CD14-positive monocyte (primary cell): ENCODE measurements at regions of chr11 and their contacts with region 1.

Region 1: DNA sequence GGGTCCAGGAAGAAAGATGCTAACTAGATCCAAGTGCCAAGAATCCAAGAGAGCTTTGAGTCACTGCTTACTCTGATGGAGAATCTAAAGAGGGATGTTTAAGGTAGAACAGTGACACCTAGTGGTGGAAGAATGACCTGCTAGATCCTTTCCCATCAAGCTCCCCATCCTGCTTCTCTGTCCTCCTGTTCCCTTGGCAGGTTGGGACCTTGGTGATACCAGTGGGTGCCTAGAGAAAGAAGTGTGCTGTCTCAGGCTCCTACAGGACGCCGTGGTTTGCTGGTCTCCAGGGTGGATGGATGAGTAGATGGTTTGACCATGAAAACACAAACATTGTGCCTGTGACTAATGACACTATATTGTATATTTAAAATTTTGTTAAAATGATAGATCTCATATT is 383.7 kb downstream of the TMEM135 start:
- DNase-seq: peak; percentile 24 to 55 (median 50)
- H3K4me3 ChIP-seq: no peak overlapping the region
- H3K4me3 Mint-ChIP-seq: no peak overlapping the region
- H3K27ac ChIP-seq: no peak overlapping the region
- H3K27ac Mint-ChIP-seq: no peak overlapping the region
- H3K4me1 ChIP-seq: no peaks in the 10 kb centered on the region
- H3K4me1 Mint-ChIP-seq: no peaks in the 10 kb centered on the region
- H3K27me3 ChIP-seq: no peaks in the 10 kb centered on the region
- H3K27me3 Mint-ChIP-seq: peaks cover 0 to 1% (median 0%) of the 10 kb centered on the region in 3 donors
- CTCF ChIP-seq: peak; percentile 81

Region 2: DNA sequence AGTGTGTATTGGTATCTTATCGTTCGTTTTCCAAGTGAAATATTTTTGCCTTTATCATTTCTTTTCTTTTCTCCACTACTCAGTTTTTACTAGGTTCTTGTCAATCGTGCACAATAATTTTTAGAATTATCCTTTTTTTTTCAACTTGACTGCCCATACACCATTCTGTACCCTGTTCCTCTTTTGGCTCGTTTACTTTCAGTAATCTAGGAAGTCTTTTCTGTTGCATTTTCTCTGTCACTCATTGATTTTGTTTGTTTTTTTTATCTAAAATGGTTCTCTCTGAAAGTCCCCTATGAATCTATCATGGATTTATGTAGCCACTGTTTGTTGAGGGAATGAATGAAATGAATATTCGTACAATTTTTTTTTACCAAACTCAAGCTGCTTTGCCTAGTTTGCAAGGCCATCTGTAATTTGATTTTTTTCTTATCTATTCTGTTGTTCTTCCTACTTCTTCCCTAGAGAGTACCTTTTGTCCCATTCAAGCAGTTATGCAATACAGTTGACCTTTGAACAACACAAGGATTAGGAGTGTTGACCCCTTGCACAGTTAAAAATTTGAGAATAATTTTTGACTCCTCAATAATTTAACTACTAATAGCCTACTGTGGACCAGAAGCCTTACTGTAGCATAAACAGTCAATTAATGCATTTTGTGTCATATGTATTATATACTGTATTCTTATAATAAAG is 217.4 kb before region 1 on chr11:
- intact Hi-C with region 1: no loop called
- DNase-seq: no peak
- H3K4me3 ChIP-seq: no peak overlapping the region
- H3K4me3 Mint-ChIP-seq: no peak overlapping the region
- H3K27ac ChIP-seq: no peak overlapping the region
- H3K27ac Mint-ChIP-seq: no peak overlapping the region
- H3K4me1 ChIP-seq: no peaks in the 10 kb centered on the region
- H3K4me1 Mint-ChIP-seq: no peaks in the 10 kb centered on the region
- H3K27me3 ChIP-seq: no peaks in the 10 kb centered on the region
- H3K27me3 Mint-ChIP-seq: no peaks in the 10 kb centered on the region
- CTCF ChIP-seq: no peak

Region 3: GRCh38 chr11:87352759-87353707 is 68.4 kb before region 1 on chr11:
- intact Hi-C with region 1: loop called (anchors 1 to 2 kb)
- DNase-seq: peak; percentile 45 to 66 (median 54)
- H3K4me3 ChIP-seq: no peak overlapping the region
- H3K4me3 Mint-ChIP-seq: no peak overlapping the region
- H3K27ac ChIP-seq: no peak overlapping the region
- H3K27ac Mint-ChIP-seq: peak overlapping the region in 1 of 7 donors; percentile 19
- H3K4me1 ChIP-seq: peaks cover 8 to 14% of the 10 kb centered on the region in 2 donors
- H3K4me1 Mint-ChIP-seq: peaks cover 18% of the 10 kb centered on the region
- H3K27me3 ChIP-seq: no peaks in the 10 kb centered on the region
- H3K27me3 Mint-ChIP-seq: peaks cover 0 to 3% (median 0%) of the 10 kb centered on the region in 3 donors
- CTCF ChIP-seq: peak; percentile 98